A673 (cell line): ENCODE measurements at regions of chr2 and their contacts with region 1.

Region 1: DNA sequence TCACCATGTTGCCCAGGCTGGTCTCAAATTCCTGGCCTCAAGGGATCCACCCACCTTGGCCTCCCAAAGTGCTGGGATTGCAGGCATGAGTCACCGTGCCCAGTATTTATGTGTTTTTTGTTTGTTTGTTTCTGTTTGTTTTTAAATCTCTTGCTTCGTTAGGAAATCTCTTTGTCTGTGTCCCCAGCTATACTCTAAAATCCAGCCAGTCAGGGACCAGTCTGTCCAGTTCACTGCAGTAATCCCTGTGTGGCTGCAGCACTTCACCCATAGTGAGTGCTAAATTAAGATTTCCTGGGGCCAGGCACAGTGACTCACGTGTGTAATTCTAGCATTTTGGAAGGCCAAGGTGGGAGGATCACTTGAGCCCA is 36.9 kb downstream of the CCDC195 start:
- DNase-seq: no peak
- H3K4me3 ChIP-seq: no peak overlapping the region
- H3K27ac ChIP-seq: no peak overlapping the region
- H3K4me1 ChIP-seq: no peaks in the 10 kb centered on the region
- H3K27me3 ChIP-seq: no peaks in the 10 kb centered on the region
- CTCF ChIP-seq: no peak

Region 2: GRCh38 chr2:224601923-224602322 is 77.3 kb before region 1 on chr2:
- CTCF ChIA-PET with region 1: no interaction called
- POLR2A ChIA-PET with region 1: no interaction called
- intact Hi-C with region 1: no loop called
- DNase-seq: no peak
- H3K4me3 ChIP-seq: no peak overlapping the region
- H3K27ac ChIP-seq: no peak overlapping the region
- H3K4me1 ChIP-seq: peaks cover 5% of the 10 kb centered on the region
- H3K27me3 ChIP-seq: no peaks in the 10 kb centered on the region
- CTCF ChIP-seq: no peak

Region 3: DNA sequence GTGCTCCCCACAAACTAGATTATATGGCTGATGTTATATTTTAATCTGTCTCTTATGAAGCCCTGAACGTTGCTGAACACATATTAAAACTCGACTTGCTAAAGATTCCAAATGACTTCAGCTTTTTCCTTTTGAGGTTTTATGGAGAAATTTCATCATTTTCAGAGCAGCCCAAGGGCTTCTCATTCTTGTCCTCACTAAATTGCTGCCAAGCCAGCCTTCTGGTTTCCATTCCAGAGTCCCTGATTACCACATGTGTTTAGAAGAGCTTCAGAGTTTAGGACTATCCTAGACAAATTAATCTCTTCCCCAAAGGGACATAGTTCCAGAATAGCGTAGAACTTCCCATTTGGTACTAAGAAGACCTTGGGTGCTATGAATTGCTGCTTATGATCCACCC is 114.7 kb after region 1 on chr2:
- CTCF ChIA-PET with region 1: no interaction called
- POLR2A ChIA-PET with region 1: interaction called, 12 read pairs
- intact Hi-C with region 1: no loop called
- DNase-seq: no peak
- H3K4me3 ChIP-seq: no peak overlapping the region
- H3K27ac ChIP-seq: no peak overlapping the region
- H3K4me1 ChIP-seq: no peaks in the 10 kb centered on the region
- H3K27me3 ChIP-seq: no peaks in the 10 kb centered on the region
- CTCF ChIP-seq: no peak

Region 4: GRCh38 chr2:225367446-225367845 is 688.2 kb after region 1 on chr2:
- CTCF ChIA-PET with region 1: no interaction called
- POLR2A ChIA-PET with region 1: no interaction called
- intact Hi-C with region 1: no loop called
- DNase-seq: no peak
- H3K4me3 ChIP-seq: no peak overlapping the region
- H3K27ac ChIP-seq: no peak overlapping the region
- H3K4me1 ChIP-seq: no peaks in the 10 kb centered on the region
- H3K27me3 ChIP-seq: no peaks in the 10 kb centered on the region
- CTCF ChIP-seq: no peak